ENCODE measurements at regions of chr10 and their contacts with region 1.

Region 1: GRCh38 chr10:105950410-105950809 is 1214.1 kb downstream of the SORCS1 start:
- DNase-seq: peak in 1 of 2 donors; percentile 44
- ATAC-seq: peak; percentile 68
- H3K4me3 ChIP-seq: no peak overlapping the region
- H3K27ac ChIP-seq: no peak overlapping the region
- H3K4me1 ChIP-seq: no peaks in the 10 kb centered on the region
- H3K27me3 ChIP-seq: no peaks in the 10 kb centered on the region

Region 2: DNA sequence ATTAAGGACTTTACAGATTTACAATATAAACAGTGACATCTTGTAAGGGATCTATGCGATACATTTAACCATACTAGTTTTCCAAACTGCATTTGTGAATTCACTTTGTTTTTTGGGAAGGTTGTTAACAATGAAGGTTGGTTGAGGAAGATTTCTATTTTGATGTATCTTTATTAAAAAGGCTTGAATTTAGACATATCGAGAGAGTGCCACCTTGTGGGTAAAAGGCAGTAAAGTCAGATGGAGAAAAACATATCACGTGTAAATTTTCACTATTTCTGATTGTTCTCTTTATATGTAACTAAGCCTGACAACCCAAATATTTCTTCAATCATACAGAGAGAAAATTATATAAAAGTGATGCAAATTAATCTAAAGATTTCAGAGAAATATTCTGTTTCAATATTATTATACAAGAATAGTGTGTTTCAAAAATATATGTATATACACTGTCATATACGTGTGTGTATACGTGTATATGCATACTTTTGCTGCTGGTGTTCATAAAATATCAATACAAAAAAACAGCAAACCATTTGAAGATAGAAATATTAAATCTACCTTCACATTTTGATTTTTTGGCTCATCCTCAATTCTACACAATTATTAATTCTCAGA is 225.5 kb after region 1 on chr10:
- intact Hi-C with region 1: loop called in 1 of 2 experiments (anchors 10 kb)
- DNase-seq: no peak
- ATAC-seq: no peak
- H3K4me3 ChIP-seq: no peak overlapping the region
- H3K27ac ChIP-seq: no peak overlapping the region
- H3K4me1 ChIP-seq: no peaks in the 10 kb centered on the region
- H3K27me3 ChIP-seq: no peaks in the 10 kb centered on the region

Measured in aorta (tissue), 5 donors.